ENCODE measurements at regions of chr4 and their contacts with region 1.

Region 1: DNA sequence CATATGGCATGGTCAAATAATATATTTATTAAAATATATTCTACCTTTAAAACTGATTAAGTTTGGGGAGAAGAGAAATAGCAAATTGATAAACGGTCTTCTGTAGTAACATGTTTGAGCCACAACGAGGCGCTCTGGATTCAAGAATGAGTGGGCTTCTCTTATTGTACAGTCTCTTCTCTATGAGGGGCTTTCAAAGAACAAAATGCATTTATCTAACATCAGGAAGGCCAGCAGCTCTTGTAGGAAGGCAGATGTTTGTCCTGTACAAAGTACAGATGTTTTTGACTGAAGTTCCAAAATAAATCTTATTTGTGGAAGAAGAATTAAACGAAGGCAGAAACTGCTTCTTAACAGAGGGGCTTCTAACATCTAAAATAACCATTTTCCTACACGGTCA is 153.6 kb downstream of the RASL11B start:
- DNase-seq: no peak
- ATAC-seq: peak; percentile 43

Region 2: DNA sequence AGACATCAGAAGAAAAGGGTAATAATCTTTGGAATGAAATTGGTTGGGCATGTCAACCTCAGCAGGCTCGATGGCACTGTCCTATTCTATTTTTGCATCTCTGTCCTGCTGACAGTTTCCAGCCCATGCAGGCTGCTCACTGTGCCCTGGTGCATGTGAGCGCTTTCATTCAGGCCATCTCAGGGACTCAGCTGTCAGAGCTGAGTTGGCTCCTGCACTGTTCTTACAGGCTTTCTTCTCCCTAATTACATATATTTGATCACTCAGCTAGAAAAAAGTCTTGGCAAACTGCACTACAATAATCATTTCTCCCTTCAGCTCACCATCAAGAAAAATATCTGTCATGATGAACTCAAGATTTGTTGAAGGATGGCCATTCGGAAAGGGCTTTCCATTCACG is 68.8 kb before region 1 on chr4:
- intact Hi-C with region 1: no loop called
- DNase-seq: peak; percentile 42
- ATAC-seq: peak; percentile 96

Region 3: DNA sequence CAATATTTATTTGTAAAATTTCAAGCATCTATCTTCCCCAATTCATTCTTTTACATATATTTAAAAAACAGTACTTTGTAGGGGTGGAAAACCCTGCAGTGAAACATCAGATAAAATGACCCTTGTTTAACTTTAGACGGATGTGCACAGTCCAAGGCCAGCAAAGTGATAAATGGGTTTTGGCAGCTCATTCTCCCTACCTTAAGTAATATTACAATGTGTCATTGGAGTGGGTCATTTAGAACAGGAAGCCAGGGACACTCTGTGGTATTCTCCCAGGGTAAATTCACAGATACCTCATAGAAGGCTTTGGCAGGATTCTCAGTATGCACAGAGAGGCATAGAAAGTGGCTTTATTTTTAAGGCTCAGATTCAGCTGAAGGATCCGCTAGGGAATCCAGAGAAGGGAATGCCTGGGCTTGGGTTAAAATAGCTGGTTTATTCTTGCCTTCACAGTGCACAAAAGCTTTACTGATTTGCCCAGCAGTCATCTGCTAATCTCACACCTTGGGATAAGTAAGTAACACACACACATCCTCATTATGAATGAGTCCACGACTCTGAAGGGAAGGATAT is 53.2 kb after region 1 on chr4:
- intact Hi-C with region 1: no loop called
- DNase-seq: no peak
- ATAC-seq: no peak

Region 4: GRCh38 chr4:53148931-53149330 is 133.2 kb after region 1 on chr4:
- intact Hi-C with region 1: loop called (anchors 10 kb)
- DNase-seq: no peak
- ATAC-seq: no peak

Region 5: DNA sequence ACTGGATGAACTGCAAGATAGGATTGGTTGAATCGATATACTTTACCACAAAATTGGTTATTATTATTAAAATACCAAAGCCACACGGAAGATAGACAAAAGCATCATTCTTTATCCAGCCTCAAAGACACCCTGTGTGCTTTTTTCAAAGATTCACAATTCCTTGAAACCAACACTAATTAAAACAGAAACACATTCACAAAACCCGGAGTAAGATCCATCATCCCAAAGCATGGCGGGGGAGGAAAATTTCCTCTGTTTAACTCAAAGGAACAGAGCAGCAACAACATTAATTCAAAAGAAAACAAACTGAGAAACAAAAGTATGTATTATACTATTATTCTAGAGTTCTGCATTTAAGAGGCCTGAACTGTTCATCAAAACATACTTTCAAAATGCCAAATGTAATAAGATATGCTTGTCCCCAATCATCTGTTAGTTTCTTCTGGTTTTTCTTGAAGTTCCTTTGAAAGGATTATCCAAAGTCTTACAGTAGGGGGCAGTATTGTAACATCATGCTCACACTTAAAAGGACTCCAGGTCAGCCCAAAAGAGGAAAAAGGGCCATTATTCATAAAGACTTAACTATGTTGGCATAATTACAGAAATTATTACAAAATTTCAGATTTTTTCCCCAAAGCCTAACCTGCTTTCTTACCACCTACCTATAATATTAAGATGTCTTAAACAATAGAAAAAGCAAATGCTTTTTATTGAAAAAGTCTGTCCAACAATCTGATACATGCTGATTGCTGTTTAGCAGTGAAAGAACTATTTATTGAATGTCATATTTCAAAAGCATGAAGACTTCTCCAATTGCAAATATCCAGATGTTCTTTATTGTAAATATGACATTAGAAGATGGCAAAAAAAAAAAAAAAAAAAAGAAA is 181.4 kb after region 1 on chr4:
- intact Hi-C with region 1: loop called (anchors 10 kb)
- DNase-seq: no peak
- ATAC-seq: peak; percentile 73

Region 6: DNA sequence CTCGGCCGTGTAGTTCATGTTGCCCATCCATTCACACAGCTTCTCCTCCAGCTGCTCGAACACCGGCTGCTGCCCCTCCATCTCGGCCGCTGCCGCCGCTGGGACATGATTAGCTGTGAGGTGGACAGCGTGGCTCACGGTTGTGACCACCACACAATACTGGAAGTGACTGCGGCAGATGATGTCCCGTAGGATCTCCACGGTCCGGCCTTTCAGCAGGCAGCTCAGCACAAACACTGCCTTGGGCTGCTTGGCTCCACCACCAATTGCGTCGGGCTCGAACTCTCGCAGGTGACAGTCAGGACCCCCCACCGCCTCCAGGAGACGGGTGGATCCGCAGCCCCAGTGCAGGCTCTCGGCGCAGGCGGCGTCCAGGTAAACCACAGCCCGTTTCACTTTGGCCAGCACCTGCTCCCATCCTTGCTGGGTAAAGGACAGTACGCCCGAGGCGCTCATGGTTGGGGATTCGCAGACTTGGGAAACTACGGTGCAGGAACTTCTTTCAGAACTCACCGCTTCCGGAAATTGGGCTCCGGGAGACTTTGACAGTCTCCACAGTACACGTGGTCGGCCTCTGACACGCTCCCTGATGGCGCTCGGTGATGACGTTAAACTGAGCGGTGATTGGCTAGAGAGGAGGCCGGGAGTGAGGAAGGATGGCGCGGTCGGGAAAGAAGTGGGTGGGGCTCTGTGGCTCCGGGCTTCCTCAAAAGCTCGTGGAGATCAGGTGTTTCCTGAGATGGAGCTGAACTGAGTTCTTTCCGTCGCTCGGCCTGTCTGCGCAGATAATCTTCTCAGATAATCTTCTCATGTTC is 350.0 kb after region 1 on chr4 and contains the start of gene SCFD2:
- intact Hi-C with region 1: loop called (anchors 10 kb)
- DNase-seq: peak; percentile 97
- ATAC-seq: peak; percentile 100
- total RNA-seq, gene SCFD2: 9.1 TPM